ENCODE measurements at regions of chr1 and their contacts with region 1.

Region 1: DNA sequence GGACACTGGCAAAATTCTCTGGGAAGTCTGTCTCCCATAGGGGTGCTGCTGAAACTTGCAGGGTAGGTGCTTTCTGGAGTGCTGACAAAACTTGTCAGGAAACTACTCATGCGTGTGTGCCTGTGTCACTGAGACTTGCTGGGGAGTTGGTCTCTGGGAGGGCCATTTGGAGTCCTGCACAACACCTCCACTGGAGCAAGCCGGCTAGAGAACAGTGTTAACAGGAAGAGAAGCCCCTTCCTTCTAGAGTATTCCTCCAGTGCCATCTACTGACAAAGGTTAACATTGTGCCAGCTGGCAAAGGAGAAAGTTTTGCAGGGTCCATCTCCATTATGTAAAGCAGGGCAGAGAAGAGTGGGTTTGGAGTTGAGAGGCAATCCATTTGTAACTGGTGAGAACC is 30.0 kb downstream of the ZMYM4 start:
- DNase-seq: peak in 1 of 3 donors; percentile 30
- ATAC-seq: peak; percentile 80
- H3K4me3 ChIP-seq: no peak overlapping the region
- H3K4me1 ChIP-seq: no peaks in the 10 kb centered on the region
- CTCF ChIP-seq: no peak

Region 2: DNA sequence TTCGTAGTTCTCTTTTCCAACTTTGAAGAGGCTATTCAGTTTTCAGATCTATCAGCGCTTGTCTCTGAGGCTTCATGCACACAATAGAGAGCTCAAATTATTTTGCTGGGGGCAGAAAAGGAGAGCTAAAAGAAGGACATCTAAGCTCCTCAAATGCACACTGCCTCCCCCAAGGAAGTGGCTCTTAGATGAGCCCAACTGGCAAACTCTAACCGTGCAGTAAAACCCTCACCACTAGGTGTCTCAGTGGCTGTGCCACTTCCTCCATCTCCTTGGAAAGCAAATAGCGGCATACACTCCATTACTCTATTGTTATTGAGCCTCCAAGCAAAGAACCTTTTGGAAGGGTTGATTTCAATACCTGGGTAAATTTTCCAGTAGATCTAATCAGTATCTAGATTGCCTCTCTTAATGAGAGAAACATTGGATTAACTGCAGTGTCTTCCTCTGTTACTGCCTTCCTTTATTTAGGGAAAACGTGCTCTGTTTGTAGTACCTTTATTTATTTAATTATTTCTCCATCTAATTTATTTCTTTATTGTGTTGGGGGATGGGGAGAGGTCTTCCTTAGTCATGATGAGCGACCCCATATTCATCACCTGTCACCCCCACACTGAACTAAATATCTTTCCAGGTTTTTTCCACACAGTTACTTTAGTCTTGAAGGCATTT is 96.3 kb before region 1 on chr1:
- intact Hi-C with region 1: loop called in 1 of 2 experiments (anchors 5 kb)
- DNase-seq: peak in 2 of 3 donors; percentile 58 to 84
- ATAC-seq: peak; percentile 98
- H3K4me3 ChIP-seq: no peak overlapping the region
- H3K4me1 ChIP-seq: no peaks in the 10 kb centered on the region
- CTCF ChIP-seq: peak; percentile 67

Measured in mucosa of descending colon (tissue), 3 donors.